BJ (cell line): ENCODE measurements at regions of chr19 and their contacts with region 1.

Region 1: GRCh38 chr19:52237771-52238400 is 31.5 kb upstream of the ZNF766 start:
- DNase-seq: peak; percentile 8
- H3K4me3 ChIP-seq: no peak overlapping the region
- H3K27me3 ChIP-seq: no peaks in the 10 kb centered on the region
- CTCF ChIP-seq: peak; percentile 90

Region 2: GRCh38 chr19:52020506-52020905 is 217.4 kb before region 1 on chr19:
- CTCF ChIA-PET with region 1: no interaction called
- POLR2A ChIA-PET with region 1: no interaction called
- DNase-seq: no peak
- H3K4me3 ChIP-seq: no peak overlapping the region
- H3K27me3 ChIP-seq: no peaks in the 10 kb centered on the region
- CTCF ChIP-seq: no peak

Region 3: DNA sequence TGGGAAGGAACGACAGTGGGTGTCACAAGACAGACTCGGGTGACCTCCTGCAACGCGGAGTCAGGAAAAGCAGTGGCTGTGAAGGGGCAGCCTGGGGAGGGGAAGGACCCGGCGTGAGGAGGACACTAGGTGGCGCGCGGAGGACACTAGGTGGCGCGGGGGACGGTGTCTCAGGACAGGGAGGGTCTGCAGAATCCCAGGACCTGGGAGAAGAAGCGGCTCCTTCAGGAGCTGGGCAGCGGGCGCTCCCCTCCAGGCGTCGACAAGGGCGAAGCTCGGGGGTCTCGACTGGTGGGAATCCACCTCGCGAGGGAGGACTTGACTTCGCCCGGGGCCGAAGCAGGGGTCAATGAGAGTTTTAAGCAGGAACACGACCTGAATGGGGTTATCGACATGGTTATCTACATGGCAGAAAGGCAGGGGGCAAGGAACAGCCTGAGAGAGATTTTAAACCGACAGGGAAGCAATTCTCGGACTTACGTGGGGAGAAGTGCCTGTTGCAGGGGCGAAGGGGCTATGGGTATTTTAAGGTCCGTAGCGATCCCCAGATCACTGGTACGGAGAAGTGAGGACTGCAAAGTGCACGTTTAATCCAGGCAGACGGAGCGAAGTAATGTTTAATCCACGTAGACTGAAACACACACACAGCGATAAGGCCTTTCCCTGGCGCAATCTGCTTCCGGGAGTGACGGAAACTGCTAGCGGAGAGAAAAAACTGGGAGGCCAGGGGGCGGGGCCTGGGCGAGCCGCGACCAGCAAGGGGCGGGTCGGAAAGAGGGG is 98.4 kb before region 1 on chr19 and contains the start of gene ZNF616:
- CTCF ChIA-PET with region 1: interaction called, 21 read pairs
- POLR2A ChIA-PET with region 1: no interaction called
- DNase-seq: peak; percentile 51
- H3K4me3 ChIP-seq: peak within 1 kb of the TSS; percentile 79
- H3K27me3 ChIP-seq: no peaks in the 10 kb centered on the region
- CTCF ChIP-seq: peak; percentile 80
- polyA plus RNA-seq, gene ZNF616: 2.6 and 3.1 TPM in 2 replicates

Region 4: GRCh38 chr19:52155596-52156359 is 82.1 kb before region 1 on chr19:
- CTCF ChIA-PET with region 1: no interaction called
- POLR2A ChIA-PET with region 1: no interaction called
- DNase-seq: no peak
- H3K4me3 ChIP-seq: no peak overlapping the region
- H3K27me3 ChIP-seq: no peaks in the 10 kb centered on the region
- CTCF ChIP-seq: no peak